ENCODE measurements at regions of chr11 and their contacts with region 1.

Region 1: DNA sequence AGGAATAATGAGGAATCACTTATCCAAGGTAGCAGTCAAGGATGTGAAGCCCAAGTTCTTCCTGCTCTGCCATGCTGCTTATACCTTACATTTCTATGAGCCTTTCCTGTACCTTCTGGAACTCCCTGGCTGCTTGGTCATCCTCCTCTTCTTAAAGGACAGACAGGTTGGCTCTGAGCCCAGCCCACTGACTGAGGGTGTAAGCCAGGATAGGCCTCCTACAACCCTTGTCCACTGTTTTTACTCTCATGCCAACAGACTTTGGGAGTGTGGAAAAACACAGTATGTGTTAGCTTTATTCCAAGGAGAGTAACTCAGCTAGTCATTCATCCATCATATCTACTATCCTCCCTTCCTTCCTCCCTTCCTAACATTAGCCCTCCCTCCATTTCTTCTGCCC is 47.5 kb downstream of the IRAG1 start:
- DNase-seq: no peak
- H3K4me3 ChIP-seq: no peak overlapping the region
- H3K27ac ChIP-seq: no peak overlapping the region
- H3K4me1 ChIP-seq: peaks cover 9% of the 10 kb centered on the region
- H3K27me3 ChIP-seq: no peaks in the 10 kb centered on the region
- CTCF ChIP-seq: no peak

Region 2: GRCh38 chr11:10725114-10725906 is 79.3 kb after region 1 on chr11:
- CTCF ChIA-PET with region 1: no interaction called
- dilution Hi-C with region 1: loop called (anchors 5 kb)
- in situ Hi-C with region 1: no loop called
- intact Hi-C with region 1: no loop called
- DNase-seq: peak; percentile 96
- H3K4me3 ChIP-seq: no peak overlapping the region
- H3K27ac ChIP-seq: no peak overlapping the region
- H3K4me1 ChIP-seq: peaks cover 15% of the 10 kb centered on the region
- H3K27me3 ChIP-seq: peaks cover 10% of the 10 kb centered on the region
- CTCF ChIP-seq: no peak

Measured in mammary epithelial cell (primary cell).